ENCODE measurements at regions of chr17 and their contacts with region 1.

Region 1: GRCh38 chr17:17681187-17681848 is at the start of gene RAI1:
- DNase-seq: peak; percentile 78
- H3K4me3 ChIP-seq: peak within 1 kb of the TSS; percentile 77 to 82
- H3K27ac ChIP-seq: peak within 1 kb of the TSS; percentile 94 to 99
- H3K4me1 ChIP-seq: peaks cover 30% of the 10 kb centered on the region
- H3K27me3 ChIP-seq: no peaks in the 10 kb centered on the region
- CTCF ChIP-seq: peak; percentile 72 to 99 (median 92)
- POLR2A ChIP-seq: peak; percentile 46
- total RNA-seq, gene RAI1: 69.2 to 71.0 TPM

Region 2: GRCh38 chr17:17749921-17750320 is 68.6 kb after region 1 on chr17:
- intact Hi-C with region 1: no loop called
- DNase-seq: no peak
- H3K4me3 ChIP-seq: no peak overlapping the region
- H3K27ac ChIP-seq: no peak overlapping the region
- H3K4me1 ChIP-seq: peaks cover 7% of the 10 kb centered on the region
- H3K27me3 ChIP-seq: no peaks in the 10 kb centered on the region
- CTCF ChIP-seq: no peak
- POLR2A ChIP-seq: no peak

Region 3: DNA sequence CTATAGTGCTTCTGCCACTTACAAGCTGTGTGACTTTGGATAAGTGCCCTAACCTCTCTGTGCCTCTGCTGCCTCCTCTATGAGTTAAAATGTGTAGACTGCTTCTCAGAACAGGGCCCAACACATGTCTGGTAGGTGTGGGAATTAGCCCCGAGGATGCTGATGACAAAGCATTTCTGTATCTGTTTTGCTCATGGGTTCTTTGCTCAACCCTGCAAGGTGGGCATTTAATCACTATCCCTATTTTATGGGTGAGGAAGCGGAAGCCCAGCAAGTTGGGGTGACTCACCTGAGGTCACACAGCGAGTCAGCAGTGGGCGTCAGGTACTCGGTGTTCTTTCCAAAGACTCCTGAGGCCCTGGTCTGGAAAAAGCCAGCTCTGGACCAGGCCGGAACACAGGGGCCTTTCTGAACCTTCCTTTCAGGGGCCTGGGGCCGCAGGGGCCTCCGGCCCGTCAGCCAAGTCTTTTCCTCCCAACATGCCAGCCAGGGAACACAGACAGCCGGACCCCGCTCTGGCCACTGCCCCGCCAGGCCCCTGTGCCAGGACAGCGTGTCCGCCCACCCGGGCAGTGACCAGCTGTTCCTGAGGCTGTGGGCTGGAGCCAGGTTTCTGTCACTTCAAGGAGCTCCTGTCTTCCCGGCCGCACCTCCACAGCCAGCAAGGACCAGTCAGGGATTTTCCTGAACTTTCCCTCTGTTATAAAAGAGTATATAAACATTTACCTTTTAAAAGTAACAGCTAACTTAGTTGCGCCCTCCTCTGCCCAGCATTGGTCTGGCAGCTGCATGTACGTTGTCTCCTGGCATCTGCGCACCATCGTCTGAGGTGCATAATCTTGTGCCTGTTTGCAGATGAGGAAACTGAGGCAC is 92.9 kb after region 1 on chr17:
- intact Hi-C with region 1: loop called (anchors 2 kb)
- DNase-seq: peak; percentile 92
- H3K4me3 ChIP-seq: no peak overlapping the region
- H3K27ac ChIP-seq: peak overlapping the region; percentile 93 to 97
- H3K4me1 ChIP-seq: peaks cover 6% of the 10 kb centered on the region
- H3K27me3 ChIP-seq: no peaks in the 10 kb centered on the region
- CTCF ChIP-seq: peak; percentile 51 to 94 (median 76)
- POLR2A ChIP-seq: peak; percentile 30

Measured in prostate gland (tissue), 2 donors.